ENCODE measurements at regions of chr5 and their contacts with region 1.

Region 1: GRCh38 chr5:52909192-52909591 is 80.0 kb upstream of the ITGA2 start:
- DNase-seq: peak in 2 of 5 donors; percentile 21 to 40
- H3K4me3 ChIP-seq: no peak overlapping the region
- H3K27ac ChIP-seq: no peak overlapping the region
- H3K4me1 ChIP-seq: no peaks in the 10 kb centered on the region
- H3K27me3 ChIP-seq: no peaks in the 10 kb centered on the region
- CTCF ChIP-seq: no peak

Region 2: DNA sequence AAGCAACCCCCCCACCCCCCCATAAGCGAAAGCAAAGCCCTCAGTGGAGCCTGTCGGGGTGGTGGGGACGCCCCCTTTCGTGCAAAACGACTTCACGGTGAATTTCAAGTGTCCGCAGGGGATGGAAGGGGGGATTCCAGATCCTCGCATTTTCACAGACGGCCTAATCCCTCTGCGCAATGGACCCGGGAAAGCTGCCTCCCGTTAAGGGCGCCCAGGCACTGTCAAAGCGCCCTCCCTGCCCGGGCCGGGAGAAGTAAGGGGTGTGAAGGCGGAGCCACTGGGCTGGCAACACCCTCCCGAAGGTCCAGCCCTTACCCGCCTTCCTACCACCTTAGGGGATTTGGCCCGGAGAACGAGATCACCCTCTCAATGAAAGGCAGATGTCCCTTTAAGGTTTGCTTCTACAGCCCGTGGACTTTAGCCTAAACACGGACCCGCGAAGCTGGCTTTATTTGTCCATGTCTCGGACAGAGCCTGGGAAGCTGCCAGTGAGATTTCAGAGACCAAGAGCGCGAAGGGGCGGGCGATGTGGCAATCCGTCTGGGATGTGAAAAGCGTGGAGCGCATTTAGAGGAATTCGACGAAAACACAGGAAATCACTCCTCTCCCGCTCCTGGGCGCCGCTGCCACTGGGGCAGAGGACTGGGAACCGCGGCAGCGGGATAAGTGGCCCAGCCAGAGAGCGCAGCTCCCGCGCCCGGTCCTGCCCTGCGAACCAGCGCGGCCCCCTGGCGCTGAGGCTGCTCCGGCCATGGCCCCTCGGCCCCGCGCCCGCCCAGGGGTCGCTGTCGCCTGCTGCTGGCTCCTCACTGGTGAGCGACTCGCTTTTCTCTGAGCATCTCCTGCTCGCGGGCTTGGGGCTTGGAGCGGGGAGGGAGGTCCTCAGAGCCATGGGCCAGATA is 121.3 kb before region 1 on chr5 and contains the starts of genes ITGA1 and PELO:
- intact Hi-C with region 1: loop called (anchors 10 kb)
- DNase-seq: peak; percentile 79 to 93 (median 89)
- H3K4me3 ChIP-seq: peak within 1 kb of the TSS; percentile 77 to 89 (median 84)
- H3K27ac ChIP-seq: peak within 1 kb of the TSS; percentile 88 to 95
- H3K4me1 ChIP-seq: peaks cover 0 to 8% (median 0%) of the 10 kb centered on the region in 3 donors
- H3K27me3 ChIP-seq: no peaks in the 10 kb centered on the region
- CTCF ChIP-seq: peak; percentile 52
- total RNA-seq, gene ITGA1: 65.6 TPM
- total RNA-seq, gene PELO: 38.7 TPM

Measured in kidney (tissue), 22 donors.